GM13977 (cell line): ENCODE measurements at regions of chr17 and their contacts with region 1.

Region 1: GRCh38 chr17:17001874-17002520 is 30.1 kb upstream of the TNFRSF13B start:
- DNase-seq: peak; percentile 90
- CTCF ChIP-seq: peak; percentile 97

Region 2: DNA sequence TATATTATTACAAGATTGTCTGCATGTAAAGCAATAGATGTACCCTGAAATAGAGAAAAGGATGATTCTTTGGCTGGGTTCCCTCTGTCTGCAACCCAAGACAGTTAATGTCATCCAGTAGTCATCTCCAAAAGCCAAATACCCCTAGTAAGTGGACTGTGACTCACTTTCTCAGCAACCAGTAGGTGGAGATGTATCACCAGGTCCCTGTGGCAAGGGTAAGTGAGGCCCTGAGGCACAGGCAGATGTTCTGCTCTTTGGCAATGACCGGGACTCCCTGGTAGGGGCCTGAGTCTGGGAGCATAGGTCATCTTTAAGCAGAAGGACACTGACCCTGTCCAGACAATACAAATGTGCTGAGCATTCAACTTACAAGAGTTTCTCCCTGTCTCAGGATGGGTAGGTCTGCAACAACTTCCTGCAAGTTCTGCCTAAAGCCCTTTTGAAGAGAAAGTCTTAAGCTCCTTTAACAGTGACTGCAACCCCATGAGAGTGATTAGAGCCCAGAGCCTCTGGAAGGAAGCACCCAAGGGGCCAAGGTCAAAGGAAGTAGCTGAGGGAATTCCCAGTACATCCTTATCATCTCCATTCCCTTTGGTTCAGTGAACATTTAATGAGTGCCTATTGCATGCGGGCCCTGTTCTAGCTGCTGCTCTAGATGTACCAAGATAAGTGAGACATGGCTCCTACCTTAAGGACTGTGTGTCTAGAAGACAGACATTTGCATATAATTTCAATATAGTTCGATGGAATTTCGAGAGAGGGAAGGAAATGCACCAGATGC is 1768.8 kb before region 1 on chr17:
- in situ Hi-C with region 1: no loop called
- DNase-seq: no peak
- CTCF ChIP-seq: no peak

Region 3: GRCh38 chr17:17098426-17099179 is 96.6 kb after region 1 on chr17:
- in situ Hi-C with region 1: no loop called
- DNase-seq: no peak
- CTCF ChIP-seq: no peak

Region 4: GRCh38 chr17:17216776-17217175 is 214.8 kb after region 1 on chr17:
- in situ Hi-C with region 1: no loop called
- DNase-seq: no peak
- CTCF ChIP-seq: peak; percentile 11

Region 5: DNA sequence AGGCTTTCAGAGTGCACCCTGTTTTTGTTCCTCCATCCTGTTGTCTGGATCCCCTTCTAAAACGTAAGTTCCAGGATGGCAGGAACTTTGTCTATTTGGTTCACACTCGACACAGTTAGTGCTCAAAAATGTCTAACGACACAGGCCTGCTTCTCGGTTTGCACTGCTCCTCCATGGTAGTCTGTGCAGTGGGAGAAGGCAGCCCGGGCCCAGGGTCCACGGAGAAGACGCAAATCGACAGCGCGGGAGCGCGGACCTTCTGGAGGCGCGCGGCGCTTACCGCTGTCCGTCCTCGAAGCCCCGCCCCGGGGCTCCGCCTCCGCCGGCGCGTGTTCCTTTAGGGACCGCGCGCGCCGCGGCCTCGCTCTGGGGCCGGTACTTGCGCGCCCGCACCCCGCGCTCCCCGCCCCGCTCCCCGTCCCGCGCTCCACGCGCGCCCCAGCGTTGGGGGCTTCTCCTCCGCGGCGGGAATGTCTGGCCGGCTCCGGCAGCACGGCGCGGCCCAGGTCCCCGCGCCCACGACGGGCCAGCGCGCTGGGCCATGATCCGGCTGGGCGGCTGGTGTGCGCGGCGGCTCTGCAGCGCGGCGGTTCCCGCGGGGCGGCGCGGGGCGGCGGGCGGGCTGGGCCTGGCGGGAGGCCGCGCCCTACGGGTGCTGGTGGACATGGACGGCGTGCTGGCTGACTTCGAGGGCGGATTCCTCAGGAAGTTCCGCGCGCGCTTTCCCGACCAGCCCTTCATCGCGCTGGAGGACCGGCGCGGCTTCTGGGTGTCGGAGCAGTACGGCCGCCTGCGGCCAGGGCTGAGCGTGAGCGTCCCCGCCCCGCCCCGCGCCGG is 301.2 kb after region 1 on chr17 and contains the start of gene NT5M:
- in situ Hi-C with region 1: loop called (anchors 25 kb)
- DNase-seq: peak; percentile 91
- CTCF ChIP-seq: no peak